ENCODE measurements at regions of chr10 and their contacts with region 1.

Region 1: DNA sequence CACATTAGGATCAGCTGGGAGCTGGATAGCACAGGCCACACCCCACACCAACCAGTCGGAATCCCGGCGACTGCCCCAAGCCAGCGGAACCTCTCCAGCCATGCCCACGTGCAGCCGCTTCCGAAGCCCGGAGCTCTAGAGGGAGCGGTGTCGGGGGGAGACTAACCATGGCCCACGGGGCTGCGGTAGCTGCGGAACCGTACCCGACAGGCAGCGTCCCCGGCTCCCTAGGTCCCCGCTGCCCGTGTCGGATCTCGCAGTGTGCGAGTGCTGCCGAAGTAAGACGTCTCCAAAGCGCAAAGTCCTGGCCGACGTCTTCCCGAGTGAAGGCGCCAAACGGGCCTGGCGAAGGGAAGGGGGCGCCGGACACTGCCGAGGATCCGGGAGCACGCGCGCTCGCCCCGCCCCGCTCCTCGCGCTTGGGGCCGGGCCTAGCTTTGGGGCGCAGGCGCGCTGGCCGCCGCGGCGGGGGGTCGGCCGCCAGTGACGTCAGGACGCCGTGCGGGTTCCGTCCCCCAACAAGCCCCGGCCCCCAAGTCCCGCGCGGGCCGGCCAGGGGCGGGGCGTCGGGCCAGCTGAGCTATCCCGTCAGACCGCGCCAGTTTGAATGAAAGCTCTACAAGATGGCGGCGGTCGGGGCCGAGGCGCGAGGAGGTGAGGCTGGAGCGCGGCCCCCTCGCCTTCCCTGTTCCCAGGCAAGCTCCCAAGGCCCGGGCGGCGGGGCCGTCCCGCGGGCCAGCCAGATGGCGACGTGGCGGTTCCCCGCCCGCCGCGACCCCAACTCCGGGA is at the start of gene SUV39H2:
- DNase-seq: peak; percentile 98
- H3K4me3 ChIP-seq: peak within 1 kb of the TSS; percentile 88 to 97 (median 90)
- H3K27ac ChIP-seq: peak within 1 kb of the TSS; percentile 69
- H3K4me1 ChIP-seq: peaks cover 20% of the 10 kb centered on the region
- H3K27me3 ChIP-seq: no peaks in the 10 kb centered on the region
- CTCF ChIP-seq: no peak
- POLR2A ChIP-seq: peak; percentile 88
- total RNA-seq, gene SUV39H2: 25.8 and 29.9 TPM in 2 replicates

Region 2: GRCh38 chr10:14588084-14588937 is 290.1 kb before region 1 on chr10:
- CTCF ChIA-PET with region 1: interaction called, 4 read pairs
- POLR2A ChIA-PET with region 1: no interaction called
- dilution Hi-C with region 1: no loop called
- intact Hi-C with region 1: loop called (anchors 1 kb)
- DNase-seq: peak; percentile 97
- H3K4me3 ChIP-seq: peak overlapping the region in 1 of 3 experiments; percentile 11
- H3K27ac ChIP-seq: peak overlapping the region; percentile 99
- H3K4me1 ChIP-seq: peaks cover 47% of the 10 kb centered on the region
- H3K27me3 ChIP-seq: no peaks in the 10 kb centered on the region
- CTCF ChIP-seq: no peak
- POLR2A ChIP-seq: no peak

Region 3: DNA sequence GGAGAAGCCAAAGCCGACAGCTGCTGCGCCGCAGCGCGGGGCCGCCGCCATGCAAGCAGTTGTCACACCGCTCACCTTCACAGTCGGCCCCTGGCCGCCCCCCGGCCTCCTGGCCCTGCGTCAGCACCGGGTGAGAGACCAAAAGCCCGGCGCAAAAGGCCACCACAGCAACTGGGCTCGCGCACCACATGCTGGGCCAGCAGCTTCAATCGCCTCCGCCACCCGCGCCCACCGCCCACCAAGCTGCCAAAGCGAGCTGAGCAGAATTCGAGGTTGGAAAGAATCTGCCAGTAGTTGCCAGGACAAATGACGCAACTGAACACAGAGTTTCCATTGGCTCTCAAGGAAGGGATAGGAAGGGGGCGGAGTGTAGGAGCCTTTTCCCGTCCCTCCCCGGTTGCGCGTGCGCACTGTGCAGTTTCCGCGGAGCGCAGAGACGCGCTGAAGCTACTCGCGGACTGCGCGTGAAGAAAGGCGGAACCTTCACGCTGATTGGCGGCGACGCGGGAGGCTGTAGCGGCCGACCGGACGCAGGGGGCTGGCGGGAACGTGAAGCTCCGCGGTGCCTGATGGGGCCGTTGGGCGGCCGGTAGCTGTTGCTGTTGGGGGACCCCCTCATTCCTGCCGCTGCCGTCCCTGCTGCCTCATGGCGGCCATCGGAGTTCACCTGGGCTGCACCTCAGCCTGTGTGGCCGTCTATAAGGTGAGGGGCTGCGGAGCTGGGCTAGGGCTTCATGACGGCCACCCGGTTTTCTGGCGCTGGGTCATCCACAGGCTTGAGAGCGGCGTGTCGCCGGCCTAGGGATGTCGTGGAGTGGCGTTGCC is 40.5 kb before region 1 on chr10 and contains the starts of genes CDNF, HSPA14 and MSANTD7:
- CTCF ChIA-PET with region 1: interaction called, 16 read pairs
- POLR2A ChIA-PET with region 1: interaction called, 8 read pairs
- dilution Hi-C with region 1: no loop called
- intact Hi-C with region 1: loop called (anchors 1 kb)
- DNase-seq: peak; percentile 100
- H3K4me3 ChIP-seq: peak within 1 kb of the TSS; percentile 47 to 81 (median 71)
- H3K27ac ChIP-seq: peak within 1 kb of the TSS; percentile 74
- H3K4me1 ChIP-seq: peaks cover 11% of the 10 kb centered on the region
- H3K27me3 ChIP-seq: no peaks in the 10 kb centered on the region
- CTCF ChIP-seq: no peak
- POLR2A ChIP-seq: peak; percentile 92
- total RNA-seq, gene CDNF: 0.58 and 0.99 TPM in 2 replicates
- total RNA-seq, gene HSPA14: 15.7 and 18.0 TPM in 2 replicates
- total RNA-seq, gene MSANTD7: 13.1 and 13.6 TPM in 2 replicates

Region 4: DNA sequence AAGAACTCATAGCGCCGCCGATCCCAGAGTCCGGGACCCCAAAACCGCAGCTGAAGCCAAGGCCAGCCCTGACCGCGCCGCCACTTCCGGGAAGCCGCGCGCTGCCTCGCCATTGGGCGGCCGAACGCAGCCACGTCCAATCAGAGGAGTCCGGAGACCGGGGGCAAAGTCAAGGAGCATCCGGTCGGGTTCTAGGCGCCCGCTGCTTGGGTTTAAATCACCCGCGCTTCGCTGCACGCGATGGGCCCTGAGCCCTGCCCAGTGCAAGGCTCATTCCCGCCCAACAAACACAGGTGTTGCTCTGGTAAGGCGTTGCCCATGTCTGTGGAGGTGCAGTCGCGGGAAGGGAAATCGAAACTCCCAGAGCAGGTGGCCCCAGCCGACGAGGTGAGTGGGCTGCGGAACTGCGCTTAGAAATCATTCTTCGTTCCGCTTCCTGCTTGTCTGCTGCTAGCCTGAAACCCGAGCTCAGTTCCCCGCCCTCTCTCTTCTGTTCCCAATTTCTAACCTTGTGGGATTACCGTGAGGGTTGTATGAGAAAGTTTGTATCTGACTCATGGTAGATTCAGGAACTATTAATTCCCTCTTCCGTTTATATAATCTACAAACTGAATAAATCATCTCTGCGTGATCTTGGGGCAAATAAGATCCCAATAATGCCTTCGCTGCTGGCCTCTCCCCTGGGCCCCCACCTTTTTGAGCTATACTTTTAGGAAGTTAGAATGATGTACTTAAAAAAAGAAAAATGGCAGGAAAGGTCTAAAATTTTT is 75.7 kb after region 1 on chr10 and contains the start of gene DCLRE1C:
- CTCF ChIA-PET with region 1: interaction called, 10 read pairs
- POLR2A ChIA-PET with region 1: no interaction called
- dilution Hi-C with region 1: no loop called
- intact Hi-C with region 1: loop called (anchors 2 kb)
- DNase-seq: peak; percentile 87
- H3K4me3 ChIP-seq: peak within 1 kb of the TSS; percentile 48 to 73 (median 69)
- H3K27ac ChIP-seq: peak within 1 kb of the TSS; percentile 79
- H3K4me1 ChIP-seq: peaks cover 18% of the 10 kb centered on the region
- H3K27me3 ChIP-seq: no peaks in the 10 kb centered on the region
- CTCF ChIP-seq: no peak
- POLR2A ChIP-seq: peak; percentile 71
- total RNA-seq, gene DCLRE1C: 11.0 and 15.8 TPM in 2 replicates

Region 5: DNA sequence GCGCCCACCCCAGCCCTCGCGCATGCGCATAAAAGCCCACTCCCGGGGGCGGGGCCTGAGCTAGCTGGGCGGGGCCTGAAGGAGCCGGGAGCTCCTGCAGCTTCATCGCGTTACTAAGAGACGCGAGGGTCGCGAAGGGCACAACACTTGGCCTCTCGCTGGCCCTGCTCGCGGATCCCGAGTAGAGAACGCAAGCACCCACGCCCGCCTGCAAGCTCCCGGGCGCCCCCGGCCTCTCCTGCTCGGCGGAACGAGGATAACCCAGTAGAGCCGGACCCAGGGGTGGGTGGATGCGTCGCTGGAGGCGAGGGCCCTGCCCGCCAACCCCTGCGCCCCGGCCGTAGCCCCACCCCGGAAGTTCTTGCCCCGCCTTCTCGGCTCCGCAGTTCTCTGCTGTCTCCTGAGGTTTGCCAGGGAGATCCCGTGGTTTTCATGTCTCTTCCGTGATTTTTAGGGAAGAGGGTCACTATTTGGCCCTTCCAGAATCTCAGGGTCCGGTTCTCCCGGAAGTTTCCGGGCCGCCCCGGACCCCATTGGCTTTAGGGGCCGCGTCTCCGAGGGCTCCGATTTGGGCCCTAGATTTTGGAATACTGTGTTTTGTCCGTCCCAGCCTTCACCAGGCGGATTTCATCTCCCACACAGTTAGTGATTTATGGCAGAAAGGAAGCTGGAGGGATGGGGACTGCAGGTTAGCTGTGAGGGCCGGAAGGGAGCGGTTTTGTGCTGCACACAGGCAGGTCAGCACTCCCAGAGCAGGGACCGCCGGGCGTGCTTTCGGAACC is 81.0 kb after region 1 on chr10 and contains the start of gene MEIG1:
- CTCF ChIA-PET with region 1: interaction called, 10 read pairs
- POLR2A ChIA-PET with region 1: interaction called, 3 read pairs
- dilution Hi-C with region 1: no loop called
- intact Hi-C with region 1: loop called (anchors 2 kb)
- DNase-seq: peak; percentile 94
- H3K4me3 ChIP-seq: peak within 1 kb of the TSS; percentile 85 to 89 (median 86)
- H3K27ac ChIP-seq: peak within 1 kb of the TSS; percentile 84
- H3K4me1 ChIP-seq: peaks cover 9% of the 10 kb centered on the region
- H3K27me3 ChIP-seq: no peaks in the 10 kb centered on the region
- CTCF ChIP-seq: no peak
- POLR2A ChIP-seq: peak; percentile 44
- total RNA-seq, gene MEIG1: not detected in 2 replicates

Region 6: DNA sequence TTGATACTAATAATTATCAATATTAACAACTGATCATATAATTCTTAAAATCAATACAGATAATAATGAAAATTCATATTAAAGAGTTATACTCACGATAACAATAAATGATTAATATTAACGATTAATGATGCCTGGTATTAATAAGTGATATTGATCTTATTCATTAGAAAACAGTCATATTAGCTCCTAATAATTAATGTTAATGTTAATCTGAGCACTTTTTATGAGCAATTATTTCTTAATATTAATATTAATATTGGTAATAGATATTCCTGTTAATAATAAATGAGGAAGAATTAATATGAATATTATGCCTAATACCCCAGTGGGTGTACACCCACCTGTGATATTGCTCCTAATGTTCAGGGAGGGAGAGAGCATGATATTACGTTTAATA is 104.3 kb after region 1 on chr10:
- CTCF ChIA-PET with region 1: no interaction called
- POLR2A ChIA-PET with region 1: no interaction called
- dilution Hi-C with region 1: no loop called
- intact Hi-C with region 1: no loop called
- DNase-seq: no peak
- H3K4me3 ChIP-seq: no peak overlapping the region
- H3K27ac ChIP-seq: no peak overlapping the region
- H3K4me1 ChIP-seq: no peaks in the 10 kb centered on the region
- H3K27me3 ChIP-seq: no peaks in the 10 kb centered on the region
- CTCF ChIP-seq: no peak
- POLR2A ChIP-seq: no peak

Region 7: GRCh38 chr10:15088428-15089261 is 210.2 kb after region 1 on chr10 and contains the start of gene ACBD7:
- CTCF ChIA-PET with region 1: no interaction called
- POLR2A ChIA-PET with region 1: no interaction called
- dilution Hi-C with region 1: no loop called
- intact Hi-C with region 1: loop called (anchors 10 kb)
- DNase-seq: peak; percentile 86
- H3K4me3 ChIP-seq: peak within 1 kb of the TSS; percentile 49 to 62 (median 57)
- H3K27ac ChIP-seq: no peak within 1 kb of the TSS
- H3K4me1 ChIP-seq: peaks cover 12% of the 10 kb centered on the region
- H3K27me3 ChIP-seq: no peaks in the 10 kb centered on the region
- CTCF ChIP-seq: peak in 1 of 2 donors; percentile 31
- POLR2A ChIP-seq: no peak
- total RNA-seq, gene ACBD7: 1.7 and 2.8 TPM in 2 replicates

Measured in endothelial cell of umbilical vein (primary cell).